Activated CD8-positive, alpha-beta memory T cell treated with anti-CD3 and anti-CD28 coated beads, Interleukin-2, amount 10 ng/mL, durations not matched to agents 7 days and 5 days (primary cell): ENCODE measurements at regions of chr20 and their contacts with region 1.

Region 1: DNA sequence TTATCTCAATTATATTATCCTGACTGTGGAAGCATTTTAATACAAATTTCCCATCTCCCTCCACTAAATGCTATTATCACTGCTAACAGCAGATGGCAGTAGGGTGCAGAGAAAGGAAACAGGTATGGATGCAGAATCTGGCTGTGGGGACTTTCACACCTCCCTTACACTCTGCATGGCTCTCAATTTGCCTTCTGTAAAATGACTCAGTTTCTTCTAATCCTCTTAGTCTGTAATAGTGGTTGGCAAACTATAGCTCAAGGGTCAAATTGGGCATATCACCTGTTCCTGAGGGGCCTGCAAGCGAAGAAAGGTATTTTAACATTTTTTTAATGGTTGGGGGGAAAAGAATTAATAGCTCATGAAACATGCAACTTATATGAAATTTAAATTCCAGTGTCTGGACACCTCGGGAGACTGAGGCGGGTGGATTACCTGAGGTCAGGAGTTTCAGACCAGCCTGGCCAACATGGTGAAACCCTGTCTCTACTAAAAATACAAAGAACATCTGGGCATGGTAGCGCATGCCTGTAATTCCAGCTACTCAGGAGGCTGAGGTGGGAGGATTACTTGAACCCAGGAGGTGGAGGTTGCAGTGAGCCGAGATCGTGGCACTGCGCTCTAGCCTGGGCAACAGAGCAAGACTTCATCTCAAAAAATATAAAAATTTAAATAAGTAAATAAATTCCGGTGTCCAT is 83.5 kb downstream of the ZMYND8 start:
- DNase-seq: peak; percentile 62
- ATAC-seq: peak; percentile 54
- H3K4me3 Mint-ChIP-seq: no peak overlapping the region
- H3K27ac Mint-ChIP-seq: no peak overlapping the region
- H3K4me1 Mint-ChIP-seq: peaks cover 42% of the 10 kb centered on the region
- H3K27me3 Mint-ChIP-seq: no peaks in the 10 kb centered on the region

Region 2: DNA sequence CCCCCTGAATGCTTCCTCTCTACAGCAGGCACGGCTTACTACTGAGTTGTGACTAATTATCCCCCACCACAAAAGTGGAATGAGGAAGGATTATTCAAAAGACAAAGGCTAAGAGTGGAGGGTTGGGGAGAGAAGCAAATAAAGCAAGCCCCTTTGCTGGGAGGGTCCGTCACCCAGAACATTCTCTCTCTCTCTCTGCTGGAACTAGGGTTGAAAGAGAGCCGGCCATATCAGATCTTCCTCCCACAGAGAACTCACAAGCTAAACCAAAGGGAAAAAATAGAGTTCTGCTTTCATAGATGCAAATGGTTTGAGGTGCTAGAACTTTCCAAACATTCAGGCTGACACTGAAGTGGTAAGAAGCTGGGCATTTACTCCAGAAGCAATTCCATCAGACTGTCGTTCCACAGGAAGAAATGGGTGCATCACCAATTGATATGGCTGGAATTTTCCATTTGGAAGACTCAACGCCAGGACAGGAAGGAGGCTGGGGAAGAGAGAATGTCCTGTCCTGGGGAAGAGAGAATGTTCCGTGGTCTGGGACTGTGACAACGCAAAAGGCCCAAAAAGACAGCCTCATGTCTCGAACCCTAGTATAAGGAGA is 75.6 kb after region 1 on chr20:
- CTCF ChIA-PET with region 1: interaction called, 25 read pairs
- DNase-seq: no peak
- ATAC-seq: no peak
- H3K4me3 Mint-ChIP-seq: no peak overlapping the region
- H3K27ac Mint-ChIP-seq: no peak overlapping the region
- H3K4me1 Mint-ChIP-seq: peaks cover 32% of the 10 kb centered on the region
- H3K27me3 Mint-ChIP-seq: no peaks in the 10 kb centered on the region

Region 3: DNA sequence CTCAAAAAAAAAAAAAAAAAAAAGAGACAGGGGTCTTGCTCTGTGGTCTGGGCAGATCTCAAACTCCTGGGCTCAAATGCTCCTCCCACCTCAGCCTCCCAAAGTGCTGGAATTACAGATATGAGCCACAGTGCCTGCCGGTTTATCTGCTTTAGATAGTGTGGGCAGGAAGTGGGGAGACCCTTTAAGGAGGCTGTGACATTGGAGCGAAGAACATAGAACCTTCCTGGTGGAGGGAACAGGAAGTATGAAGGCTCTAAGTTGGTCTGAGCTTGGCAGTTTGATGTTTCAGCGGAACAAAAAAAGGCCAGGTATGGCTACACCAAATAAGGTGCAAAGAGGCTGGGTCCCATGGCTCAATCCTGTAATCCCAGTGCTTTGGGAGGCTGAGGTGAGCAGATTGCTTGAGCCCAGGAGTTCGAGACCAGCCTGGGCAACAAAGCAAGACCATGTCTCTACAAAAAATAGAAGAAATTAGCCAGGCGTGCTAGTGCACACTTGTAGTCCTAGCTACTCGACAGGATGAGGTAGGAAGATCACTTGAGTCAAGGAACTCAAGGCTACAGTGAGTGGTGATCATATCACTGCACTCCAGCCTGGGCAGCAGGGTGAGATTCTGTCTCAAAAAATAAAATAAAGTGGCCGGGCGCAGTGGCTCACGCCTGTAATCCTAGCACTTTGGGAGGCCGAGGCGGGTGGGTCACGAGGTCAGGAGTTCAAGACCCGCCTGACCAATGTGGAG is 92.2 kb after region 1 on chr20:
- CTCF ChIA-PET with region 1: interaction called, 11 read pairs
- DNase-seq: no peak
- ATAC-seq: peak; percentile 42
- H3K4me3 Mint-ChIP-seq: no peak overlapping the region
- H3K27ac Mint-ChIP-seq: peak overlapping the region; percentile 28
- H3K4me1 Mint-ChIP-seq: peaks cover 9% of the 10 kb centered on the region
- H3K27me3 Mint-ChIP-seq: peaks cover 4% of the 10 kb centered on the region

Region 4: DNA sequence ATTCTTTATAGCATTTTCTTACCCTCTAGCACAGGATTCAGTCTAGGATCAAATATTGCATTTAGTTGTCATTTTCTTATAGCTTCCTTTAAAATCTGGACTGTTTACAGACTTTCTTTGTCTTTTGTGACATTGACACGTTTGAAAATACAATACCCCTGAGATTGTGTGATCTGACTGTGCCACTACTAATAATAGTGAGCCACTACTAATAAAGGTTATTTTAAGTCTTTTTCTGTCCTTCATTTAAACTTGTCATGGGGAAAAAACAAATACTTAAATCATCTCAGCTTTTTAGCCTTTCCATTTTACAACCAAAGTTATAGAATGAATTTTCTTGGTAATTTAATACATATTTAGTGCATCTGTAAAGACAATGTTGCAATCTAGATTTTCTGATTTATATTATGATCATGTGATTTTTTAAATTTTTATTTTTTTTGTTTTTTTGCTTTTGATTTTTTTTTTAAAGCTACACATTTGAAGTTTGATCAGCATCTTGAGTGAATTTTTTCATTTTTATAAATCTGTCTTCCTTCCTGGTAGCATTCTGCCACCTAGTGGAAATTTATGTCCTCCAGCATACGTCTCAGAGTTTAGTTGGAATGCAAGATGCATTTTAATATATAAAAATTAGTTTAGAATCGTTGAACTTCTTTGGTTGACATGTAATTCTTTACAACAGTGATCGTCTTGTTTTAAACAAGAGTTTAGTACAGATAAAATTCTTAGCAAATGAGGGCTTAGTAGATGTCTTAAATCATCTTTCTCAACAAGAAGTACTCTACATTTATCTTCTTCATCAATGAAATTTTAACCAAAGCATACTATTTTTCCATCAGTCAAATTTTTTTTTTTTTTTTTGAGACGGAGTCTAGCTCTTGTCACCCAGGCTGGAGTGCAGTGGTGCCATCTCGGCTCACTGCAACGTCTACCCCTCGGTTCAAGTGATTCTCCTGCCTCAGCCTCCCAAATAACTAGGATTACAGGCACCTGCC is 348.1 kb after region 1 on chr20:
- CTCF ChIA-PET with region 1: interaction called, 24 read pairs
- DNase-seq: no peak
- ATAC-seq: peak; percentile 49
- H3K4me3 Mint-ChIP-seq: no peak overlapping the region
- H3K27ac Mint-ChIP-seq: peak overlapping the region; percentile 9
- H3K4me1 Mint-ChIP-seq: peaks cover 46% of the 10 kb centered on the region
- H3K27me3 Mint-ChIP-seq: no peaks in the 10 kb centered on the region